Heart right ventricle (tissue), 16 donors: ENCODE measurements at regions of chr3 and their contacts with region 1.

Region 1: DNA sequence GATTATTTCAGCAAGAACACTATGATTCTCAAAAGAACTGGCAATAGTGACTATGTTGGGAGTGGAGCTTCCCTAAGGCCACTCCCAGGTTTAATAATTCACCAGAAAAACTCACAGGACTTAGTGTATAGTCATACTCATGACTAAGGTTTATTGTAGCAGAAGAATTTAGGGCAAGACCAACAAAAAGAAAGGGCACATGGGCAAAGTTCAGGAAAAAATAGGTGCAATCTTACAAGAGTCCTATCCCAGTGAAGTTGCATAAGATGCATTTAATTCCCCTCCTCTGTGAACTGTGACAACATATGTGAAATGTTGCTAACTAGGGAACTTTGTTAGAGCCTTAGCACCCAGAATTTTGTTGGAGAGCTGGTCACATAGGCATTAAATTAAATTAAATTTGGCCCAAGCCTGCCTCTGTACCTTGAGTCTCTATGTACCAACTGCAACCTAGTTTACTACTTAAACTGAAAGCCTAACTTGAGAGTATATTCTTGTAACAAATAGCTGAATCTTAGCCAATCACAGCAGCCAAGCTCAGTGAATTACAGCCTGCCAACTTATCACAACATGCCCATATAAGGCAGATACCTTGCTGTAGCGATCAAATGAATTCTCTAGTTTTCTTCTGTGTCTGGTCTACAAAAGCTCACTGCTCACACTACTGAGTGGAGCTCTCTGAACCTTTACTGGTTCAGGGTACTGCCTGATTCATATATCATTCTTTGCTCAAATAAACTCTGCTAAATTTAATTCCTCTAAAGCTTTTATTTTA is 386.2 kb upstream of the ARHGEF26 start:
- DNase-seq: no peak
- ATAC-seq: no peak
- H3K4me3 ChIP-seq: no peak overlapping the region
- H3K27ac ChIP-seq: no peak overlapping the region
- H3K4me1 ChIP-seq: no peaks in the 10 kb centered on the region
- H3K27me3 ChIP-seq: no peaks in the 10 kb centered on the region
- CTCF ChIP-seq: no peak

Region 2: GRCh38 chr3:153706706-153707105 is 28.3 kb before region 1 on chr3:
- intact Hi-C with region 1: loop called in 1 of 10 experiments (anchors 1 kb)
- DNase-seq: no peak
- ATAC-seq: no peak
- H3K4me3 ChIP-seq: no peak overlapping the region
- H3K27ac ChIP-seq: no peak overlapping the region
- H3K4me1 ChIP-seq: no peaks in the 10 kb centered on the region
- H3K27me3 ChIP-seq: no peaks in the 10 kb centered on the region
- CTCF ChIP-seq: no peak

Region 3: DNA sequence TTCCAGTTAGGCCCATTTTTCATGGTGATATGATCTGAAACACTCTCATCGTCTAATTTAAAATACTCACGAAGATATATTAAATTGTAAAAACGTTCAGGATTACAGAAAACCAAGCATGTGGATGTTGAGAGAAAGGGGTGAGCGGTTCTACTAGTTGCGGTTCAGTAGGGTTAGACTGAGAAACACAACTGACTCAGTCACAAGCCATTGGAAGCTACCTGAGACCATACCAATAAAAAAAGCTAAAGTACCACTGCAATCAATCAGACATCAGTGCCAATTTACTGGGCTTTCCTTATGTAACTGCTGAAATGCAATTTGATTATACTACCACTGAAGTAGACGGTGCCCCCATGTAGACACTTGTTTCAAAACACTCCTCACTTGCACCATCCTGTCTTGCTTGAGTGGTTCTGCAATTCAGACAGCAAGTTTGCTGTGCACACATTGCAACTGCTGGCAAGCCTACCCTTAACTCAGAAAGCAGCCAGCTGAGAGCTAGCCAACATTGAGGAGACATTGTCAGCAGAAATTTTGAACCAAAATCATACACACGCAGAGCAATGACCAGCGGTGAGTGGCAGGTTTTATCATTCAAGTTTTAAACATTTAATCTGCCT is 17.6 kb after region 1 on chr3:
- intact Hi-C with region 1: no loop called
- DNase-seq: no peak
- ATAC-seq: peak in 1 of 8 donors; percentile 55
- H3K4me3 ChIP-seq: no peak overlapping the region
- H3K27ac ChIP-seq: no peak overlapping the region
- H3K4me1 ChIP-seq: peaks cover 0 to 4% (median 0%) of the 10 kb centered on the region in 9 donors
- H3K27me3 ChIP-seq: no peaks in the 10 kb centered on the region
- CTCF ChIP-seq: no peak